IMR-90 (cell line): ENCODE measurements at regions of chr5 and their contacts with region 1.

Region 1: GRCh38 chr5:95822542-95823181 is at the start of gene GLRX:
- DNase-seq: peak; percentile 89
- ATAC-seq: peak; percentile 70
- H3K4me3 ChIP-seq: peak within 1 kb of the TSS; percentile 92
- H3K27ac ChIP-seq: peak within 1 kb of the TSS; percentile 96
- H3K4me1 ChIP-seq: peaks cover 25% of the 10 kb centered on the region
- H3K27me3 ChIP-seq: no peaks in the 10 kb centered on the region
- CTCF ChIP-seq: no peak
- POLR2A ChIP-seq: peak; percentile 80
- RAD21 ChIP-seq: no peak
- total RNA-seq, gene GLRX: 142 and 145 TPM in 2 replicates

Region 2: DNA sequence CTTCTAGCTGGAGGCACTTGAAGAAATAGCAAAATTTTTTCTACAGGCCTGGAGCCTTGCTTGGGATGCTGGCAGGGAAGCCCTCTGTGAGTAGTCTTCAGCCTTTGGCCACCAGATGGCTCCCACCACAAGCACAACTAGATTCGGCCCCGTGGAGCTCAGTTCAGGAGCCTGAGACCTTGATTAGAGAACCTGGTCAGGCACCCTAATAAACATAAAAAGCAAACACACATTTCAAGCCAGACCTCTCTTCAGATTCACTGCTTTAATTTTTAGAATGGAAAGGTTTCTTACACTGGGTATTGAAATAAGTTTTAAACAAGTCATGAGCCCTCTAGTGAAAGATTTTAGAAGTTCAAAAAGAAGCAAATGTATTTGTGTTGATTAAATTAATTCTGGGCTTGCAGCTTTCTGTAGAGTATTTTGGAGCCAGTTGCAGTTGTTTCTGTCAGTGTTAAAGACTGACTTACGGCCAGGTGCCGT is 41.5 kb before region 1 on chr5:
- CTCF ChIA-PET with region 1: interaction called, 5 read pairs
- POLR2A ChIA-PET with region 1: interaction called, 8 read pairs
- dilution Hi-C with region 1: no loop called
- in situ Hi-C with region 1: loop called (anchors 5 kb)
- intact Hi-C with region 1: loop called (anchors 2 kb)
- DNase-seq: peak; percentile 85
- ATAC-seq: peak; percentile 75
- H3K4me3 ChIP-seq: no peak overlapping the region
- H3K27ac ChIP-seq: no peak overlapping the region; the same call in 1 of the 2 replicates
- H3K4me1 ChIP-seq: peaks cover 22% of the 10 kb centered on the region
- H3K27me3 ChIP-seq: no peaks in the 10 kb centered on the region
- CTCF ChIP-seq: peak; percentile 82
- POLR2A ChIP-seq: no peak; the same call in 1 of the 2 replicates
- RAD21 ChIP-seq: peak; percentile 83

Region 3: DNA sequence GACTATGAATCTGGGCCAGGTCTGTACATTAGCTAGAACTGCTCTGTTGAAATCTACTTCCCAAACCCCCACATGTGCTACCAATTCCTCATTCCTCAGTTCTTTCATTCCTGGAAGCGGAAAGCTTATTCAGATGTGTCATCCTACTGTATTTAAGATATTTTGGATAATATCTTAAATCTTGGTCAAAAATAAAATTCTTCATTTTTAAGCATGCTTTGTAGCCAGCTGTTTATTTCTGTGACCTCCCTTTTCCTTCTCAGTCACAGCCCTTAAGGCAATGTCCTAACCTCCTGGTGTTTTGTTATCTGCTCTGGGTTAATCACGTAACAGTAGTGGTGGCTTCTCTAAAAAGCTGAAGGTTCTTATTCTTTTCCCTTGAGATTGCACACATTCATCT is 35.8 kb before region 1 on chr5:
- CTCF ChIA-PET with region 1: interaction called, 4 read pairs
- POLR2A ChIA-PET with region 1: interaction called, 8 read pairs
- dilution Hi-C with region 1: no loop called
- in situ Hi-C with region 1: loop called (anchors 5 kb)
- intact Hi-C with region 1: no loop called
- DNase-seq: peak; percentile 75
- ATAC-seq: peak; percentile 61
- H3K4me3 ChIP-seq: no peak overlapping the region
- H3K27ac ChIP-seq: peak overlapping the region; percentile 2; the same call in 1 of the 2 replicates
- H3K4me1 ChIP-seq: peaks cover 10% of the 10 kb centered on the region
- H3K27me3 ChIP-seq: no peaks in the 10 kb centered on the region
- CTCF ChIP-seq: no peak
- POLR2A ChIP-seq: no peak
- RAD21 ChIP-seq: no peak

Region 4: DNA sequence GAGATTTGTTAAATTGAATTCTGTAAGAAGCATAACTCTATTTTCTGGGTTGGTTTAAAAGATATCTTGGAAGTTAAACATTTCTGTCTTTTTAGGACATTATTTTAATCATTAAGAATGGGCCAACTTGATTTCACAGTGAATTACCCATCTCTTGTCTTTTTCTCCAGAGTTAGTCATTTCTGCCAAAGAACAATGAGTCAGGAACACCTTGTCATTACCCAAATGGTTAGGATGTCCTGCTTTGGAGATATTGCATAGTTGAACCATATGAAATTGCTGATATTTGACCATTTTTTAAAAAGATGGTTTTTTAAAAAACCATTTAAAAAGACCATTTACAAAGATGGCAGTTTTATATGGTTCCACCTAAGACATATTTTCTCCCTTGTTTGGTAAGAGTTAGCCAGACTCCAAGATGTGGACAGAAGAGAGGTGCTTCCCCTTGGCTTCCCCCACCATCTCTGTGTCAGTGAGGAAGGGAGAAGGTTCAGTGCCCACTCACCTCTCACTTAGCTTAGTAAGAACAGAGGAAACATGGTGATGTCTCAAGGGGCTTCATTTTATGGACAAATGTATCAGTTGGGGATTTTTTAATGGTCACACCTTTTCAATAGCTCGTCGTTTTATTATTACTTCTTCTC is 507.3 kb after region 1 on chr5:
- CTCF ChIA-PET with region 1: no interaction called
- POLR2A ChIA-PET with region 1: interaction called, 35 read pairs
- dilution Hi-C with region 1: no loop called
- in situ Hi-C with region 1: no loop called
- intact Hi-C with region 1: no loop called
- DNase-seq: no peak
- ATAC-seq: no peak
- H3K4me3 ChIP-seq: no peak overlapping the region
- H3K27ac ChIP-seq: peak overlapping the region; percentile 52; the same call in 1 of the 2 replicates
- H3K4me1 ChIP-seq: peaks cover 19% of the 10 kb centered on the region
- H3K27me3 ChIP-seq: no peaks in the 10 kb centered on the region
- CTCF ChIP-seq: no peak
- POLR2A ChIP-seq: no peak
- RAD21 ChIP-seq: no peak